ENCODE measurements at regions of chr11 and their contacts with region 1.

Region 1: GRCh38 chr11:6757373-6757967 is 14.3 kb downstream of the OR2AG2 start:
- DNase-seq: peak; percentile 37 to 82 (median 56)
- ATAC-seq: peak; percentile 83
- H3K4me3 ChIP-seq: no peak overlapping the region
- H3K4me3 Mint-ChIP-seq: no peak overlapping the region
- H3K27ac ChIP-seq: no peak overlapping the region
- H3K27ac Mint-ChIP-seq: no peak overlapping the region
- H3K4me1 ChIP-seq: no peaks in the 10 kb centered on the region
- H3K4me1 Mint-ChIP-seq: peaks cover 14% of the 10 kb centered on the region
- H3K27me3 ChIP-seq: no peaks in the 10 kb centered on the region
- H3K27me3 Mint-ChIP-seq: peaks cover 11% of the 10 kb centered on the region
- CTCF ChIP-seq: peak; percentile 86

Region 2: DNA sequence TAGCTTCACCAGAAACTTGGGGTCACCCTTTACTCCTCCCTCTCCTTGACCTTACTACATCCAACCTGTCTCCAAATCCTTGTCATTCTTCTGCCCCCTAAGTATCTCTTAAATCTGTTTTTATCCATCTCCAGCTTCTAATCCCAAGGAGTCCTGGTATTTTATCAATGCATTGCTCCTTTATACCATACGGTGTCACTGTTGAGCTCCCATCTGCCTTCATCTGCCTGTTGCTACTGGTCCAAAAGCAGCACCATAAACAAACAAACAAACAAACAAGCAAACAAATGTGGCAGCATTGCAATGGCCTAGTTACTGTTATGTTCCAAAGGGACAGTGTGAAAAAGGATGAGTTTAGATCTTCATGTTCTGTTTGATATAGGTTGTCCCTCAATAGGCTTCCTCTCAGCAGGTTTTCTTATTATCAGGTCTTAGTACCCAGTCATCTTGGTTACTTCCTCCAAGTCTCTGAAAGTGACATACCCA is 226.2 kb before region 1 on chr11:
- CTCF ChIA-PET with region 1: interaction called, 13 read pairs
- POLR2A ChIA-PET with region 1: no interaction called
- intact Hi-C with region 1: loop called (anchors 1 kb)
- DNase-seq: peak in 4 of 14 experiments; percentile 36 to 70 (median 64)
- ATAC-seq: peak; percentile 79
- H3K4me3 ChIP-seq: no peak overlapping the region
- H3K4me3 Mint-ChIP-seq: no peak overlapping the region
- H3K27ac ChIP-seq: no peak overlapping the region
- H3K27ac Mint-ChIP-seq: no peak overlapping the region
- H3K4me1 ChIP-seq: peaks cover 4% of the 10 kb centered on the region
- H3K4me1 Mint-ChIP-seq: peaks cover 14% of the 10 kb centered on the region
- H3K27me3 ChIP-seq: no peaks in the 10 kb centered on the region
- H3K27me3 Mint-ChIP-seq: no peaks in the 10 kb centered on the region
- CTCF ChIP-seq: peak; percentile 79

Region 3: GRCh38 chr11:6705905-6706535 is 51.5 kb before region 1 on chr11:
- CTCF ChIA-PET with region 1: interaction called, 41 read pairs
- POLR2A ChIA-PET with region 1: interaction called, 4 read pairs
- intact Hi-C with region 1: loop called (anchors 1 to 2 kb)
- DNase-seq: peak in 11 of 14 experiments; percentile 11 to 72 (median 21)
- ATAC-seq: peak; percentile 88
- H3K4me3 ChIP-seq: no peak overlapping the region
- H3K4me3 Mint-ChIP-seq: no peak overlapping the region
- H3K27ac ChIP-seq: no peak overlapping the region
- H3K27ac Mint-ChIP-seq: peak overlapping the region; percentile 78
- H3K4me1 ChIP-seq: no peaks in the 10 kb centered on the region
- H3K4me1 Mint-ChIP-seq: peaks cover 30% of the 10 kb centered on the region
- H3K27me3 ChIP-seq: no peaks in the 10 kb centered on the region
- H3K27me3 Mint-ChIP-seq: no peaks in the 10 kb centered on the region
- CTCF ChIP-seq: peak; percentile 99

Region 4: DNA sequence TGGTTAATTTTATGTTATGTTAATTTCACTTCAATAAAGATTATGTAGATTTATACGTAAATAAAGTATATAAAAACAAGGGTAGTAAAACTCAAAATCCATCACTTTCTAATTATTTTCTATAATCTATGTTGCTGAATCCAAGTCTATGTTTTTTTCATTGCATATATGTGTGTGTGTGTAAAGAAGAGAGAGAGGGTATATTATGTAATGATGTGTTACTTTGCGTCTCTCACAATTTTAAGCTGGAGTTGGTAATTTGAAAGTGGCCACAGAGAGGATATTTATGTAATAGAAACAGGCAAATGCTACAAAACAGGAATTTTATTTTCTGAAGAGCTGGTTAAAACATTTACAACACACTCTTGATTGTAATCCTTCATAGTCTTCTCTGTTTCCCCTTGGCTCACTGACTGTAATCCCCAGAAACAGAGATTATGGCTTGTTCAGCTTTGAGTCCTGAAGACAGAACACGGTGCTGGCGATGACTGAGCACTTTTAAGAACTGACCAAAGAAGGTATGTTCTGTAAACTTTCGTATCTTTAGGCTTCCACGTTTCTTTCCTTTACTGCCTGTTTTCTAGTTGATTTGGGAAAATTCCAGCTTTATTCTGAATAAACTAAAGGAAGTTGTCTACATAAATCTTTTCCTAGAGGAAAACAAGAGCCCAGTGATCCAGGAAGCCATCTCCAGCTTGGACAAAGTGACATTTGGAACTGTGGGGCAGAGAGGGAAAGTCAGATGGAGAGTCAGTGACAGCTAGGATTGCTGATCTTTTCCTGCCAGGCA is 29.3 kb before region 1 on chr11:
- CTCF ChIA-PET with region 1: interaction called, 22 read pairs
- POLR2A ChIA-PET with region 1: interaction called, 3 read pairs
- intact Hi-C with region 1: no loop called
- DNase-seq: no peak
- ATAC-seq: no peak
- H3K4me3 ChIP-seq: no peak overlapping the region
- H3K4me3 Mint-ChIP-seq: peak overlapping the region; percentile 27
- H3K27ac ChIP-seq: peak overlapping the region in 1 of 2 donors; percentile 43
- H3K27ac Mint-ChIP-seq: peak overlapping the region; percentile 76
- H3K4me1 ChIP-seq: peaks cover 28% of the 10 kb centered on the region
- H3K4me1 Mint-ChIP-seq: peaks cover 96% of the 10 kb centered on the region
- H3K27me3 ChIP-seq: no peaks in the 10 kb centered on the region
- H3K27me3 Mint-ChIP-seq: no peaks in the 10 kb centered on the region
- CTCF ChIP-seq: no peak

Region 5: GRCh38 chr11:6746086-6746618 is 11.3 kb before region 1 on chr11:
- CTCF ChIA-PET with region 1: interaction called, 181 read pairs
- POLR2A ChIA-PET with region 1: interaction called, 30 read pairs
- intact Hi-C with region 1: no loop called
- DNase-seq: peak in 13 of 14 experiments; percentile 19 to 84 (median 45)
- ATAC-seq: peak; percentile 81
- H3K4me3 ChIP-seq: peak overlapping the region; percentile 69
- H3K4me3 Mint-ChIP-seq: no peak overlapping the region
- H3K27ac ChIP-seq: peak overlapping the region; percentile 84 to 93
- H3K27ac Mint-ChIP-seq: no peak overlapping the region
- H3K4me1 ChIP-seq: peaks cover 17% of the 10 kb centered on the region
- H3K4me1 Mint-ChIP-seq: peaks cover 40% of the 10 kb centered on the region
- H3K27me3 ChIP-seq: no peaks in the 10 kb centered on the region
- H3K27me3 Mint-ChIP-seq: no peaks in the 10 kb centered on the region
- CTCF ChIP-seq: no peak